ENCODE measurements at regions of chr1 and their contacts with region 1.

Region 1: DNA sequence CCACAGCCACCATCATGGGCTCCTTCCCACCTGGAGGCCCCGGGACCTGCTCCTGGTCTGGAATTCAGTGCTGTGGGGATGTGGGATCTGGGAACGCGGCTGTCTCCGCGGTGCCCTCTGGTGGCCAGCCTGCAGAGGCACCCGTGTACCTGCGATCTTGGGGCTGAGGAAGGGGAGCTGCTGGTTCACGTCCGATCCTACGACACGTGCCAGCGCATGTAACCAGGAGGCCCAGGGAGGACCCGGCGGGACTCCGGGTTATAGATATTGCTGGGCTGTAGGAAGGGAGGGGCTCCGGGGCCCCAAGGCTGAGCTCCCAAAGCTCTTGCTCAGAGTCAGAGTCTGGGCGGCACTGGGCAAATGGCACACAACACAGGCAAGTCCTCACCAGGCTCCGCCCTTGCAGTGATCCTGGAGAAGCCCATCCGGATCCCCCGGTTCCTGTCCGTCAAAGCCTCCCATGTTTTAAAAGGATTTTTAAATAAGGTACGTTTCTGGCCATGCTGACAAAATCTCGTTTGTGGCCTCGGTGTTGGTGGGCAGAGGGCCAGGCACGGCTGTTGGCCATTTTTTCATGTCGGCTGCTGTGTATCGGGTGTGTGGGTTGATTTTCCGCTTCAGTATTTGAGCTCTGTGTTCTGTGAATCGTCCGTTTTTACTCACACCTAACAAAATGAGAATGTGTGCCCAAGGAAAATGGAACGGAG is 20.1 kb downstream of the FAAP20 start:
- DNase-seq: peak; percentile 40
- H3K4me3 ChIP-seq: no peak overlapping the region
- H3K27ac ChIP-seq: no peak overlapping the region
- H3K4me1 ChIP-seq: peaks cover 4% of the 10 kb centered on the region
- H3K27me3 ChIP-seq: no peaks in the 10 kb centered on the region
- CTCF ChIP-seq: peak; percentile 89 to 94

Region 2: DNA sequence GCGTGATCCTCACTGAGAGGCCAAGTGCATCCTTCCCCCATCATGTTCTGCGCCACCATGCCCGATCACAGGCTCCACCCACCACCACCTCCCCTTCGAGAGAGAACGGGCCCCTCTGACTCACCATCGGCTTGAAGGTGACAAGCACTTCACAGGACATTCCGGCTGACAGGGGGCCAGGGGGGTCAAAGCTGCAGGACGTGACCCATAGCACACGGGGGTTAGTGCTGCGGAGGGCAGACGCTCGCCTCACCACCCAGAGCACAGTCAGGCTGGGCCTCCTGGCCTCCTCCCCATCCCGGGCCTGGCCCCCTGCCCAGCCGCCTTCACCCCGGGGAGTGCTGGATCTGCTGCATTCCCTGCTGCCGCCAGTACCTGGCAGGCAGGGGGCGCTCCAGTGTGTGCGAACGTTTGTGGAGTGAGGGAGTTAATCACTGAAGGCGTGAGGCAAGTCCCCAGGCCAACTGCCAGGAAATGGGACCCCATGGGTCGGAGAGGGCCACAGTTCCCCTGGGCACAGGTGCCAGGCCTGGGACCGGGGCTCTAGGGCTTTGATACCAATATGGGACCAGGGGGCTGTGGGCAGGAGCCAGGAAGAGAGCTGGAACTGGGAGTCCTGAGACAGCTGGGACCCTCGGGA is 214.5 kb before region 1 on chr1:
- CTCF ChIA-PET with region 1: no interaction called
- dilution Hi-C with region 1: no loop called
- in situ Hi-C with region 1: loop called in 1 of 2 experiments (anchors 5 kb)
- intact Hi-C with region 1: loop called (anchors 1 kb)
- DNase-seq: peak; percentile 69
- H3K4me3 ChIP-seq: no peak overlapping the region
- H3K27ac ChIP-seq: no peak overlapping the region
- H3K4me1 ChIP-seq: peaks cover 6% of the 10 kb centered on the region
- H3K27me3 ChIP-seq: peaks cover 7% of the 10 kb centered on the region
- CTCF ChIP-seq: peak; percentile 85 to 95

Region 3: DNA sequence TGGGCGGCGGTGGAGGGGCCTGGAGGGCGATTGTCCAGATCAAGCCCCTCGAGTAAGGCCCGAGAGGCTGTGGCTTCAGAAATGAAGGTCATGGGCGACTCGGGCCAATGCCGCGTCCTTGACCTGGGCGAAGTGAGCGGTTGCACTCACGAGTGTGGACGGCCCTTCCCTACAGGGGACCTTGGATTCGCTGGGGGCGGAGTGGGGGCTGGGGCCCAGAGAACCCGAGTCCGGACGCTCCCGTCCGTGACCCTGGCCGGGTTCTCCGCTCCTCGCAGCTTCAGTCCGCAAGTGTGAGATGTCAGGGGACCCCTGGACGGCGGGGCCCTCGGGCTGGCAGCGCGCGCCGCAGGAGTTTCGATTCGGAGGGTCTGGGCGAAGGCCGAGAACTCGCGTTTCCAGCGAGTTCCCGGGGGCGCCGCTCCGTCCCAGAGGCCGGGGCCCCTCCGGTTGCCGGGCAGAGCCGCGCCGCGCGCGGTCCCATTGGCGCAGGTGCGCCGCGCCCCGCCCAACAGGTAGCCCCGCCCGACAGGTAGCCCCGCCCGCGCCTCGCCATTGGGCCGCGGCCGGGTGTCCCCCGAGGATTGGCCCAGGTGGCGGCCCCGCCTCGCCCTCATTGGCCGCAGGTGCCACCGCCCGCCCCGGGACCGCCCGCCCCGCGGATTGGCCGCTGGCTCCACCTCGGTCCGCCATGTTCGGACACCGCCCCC is 124.6 kb before region 1 on chr1 and contains the start of gene PRKCZ:
- CTCF ChIA-PET with region 1: no interaction called
- dilution Hi-C with region 1: no loop called
- in situ Hi-C with region 1: no loop called
- intact Hi-C with region 1: loop called (anchors 2 kb)
- DNase-seq: peak; percentile 94
- H3K4me3 ChIP-seq: peak within 1 kb of the TSS; percentile 84 to 88 (median 85)
- H3K27ac ChIP-seq: peak within 1 kb of the TSS; percentile 50
- H3K4me1 ChIP-seq: peaks cover 18% of the 10 kb centered on the region
- H3K27me3 ChIP-seq: no peaks in the 10 kb centered on the region
- CTCF ChIP-seq: no peak
- total RNA-seq, gene PRKCZ: 27.0 to 42.2 TPM

Region 4: DNA sequence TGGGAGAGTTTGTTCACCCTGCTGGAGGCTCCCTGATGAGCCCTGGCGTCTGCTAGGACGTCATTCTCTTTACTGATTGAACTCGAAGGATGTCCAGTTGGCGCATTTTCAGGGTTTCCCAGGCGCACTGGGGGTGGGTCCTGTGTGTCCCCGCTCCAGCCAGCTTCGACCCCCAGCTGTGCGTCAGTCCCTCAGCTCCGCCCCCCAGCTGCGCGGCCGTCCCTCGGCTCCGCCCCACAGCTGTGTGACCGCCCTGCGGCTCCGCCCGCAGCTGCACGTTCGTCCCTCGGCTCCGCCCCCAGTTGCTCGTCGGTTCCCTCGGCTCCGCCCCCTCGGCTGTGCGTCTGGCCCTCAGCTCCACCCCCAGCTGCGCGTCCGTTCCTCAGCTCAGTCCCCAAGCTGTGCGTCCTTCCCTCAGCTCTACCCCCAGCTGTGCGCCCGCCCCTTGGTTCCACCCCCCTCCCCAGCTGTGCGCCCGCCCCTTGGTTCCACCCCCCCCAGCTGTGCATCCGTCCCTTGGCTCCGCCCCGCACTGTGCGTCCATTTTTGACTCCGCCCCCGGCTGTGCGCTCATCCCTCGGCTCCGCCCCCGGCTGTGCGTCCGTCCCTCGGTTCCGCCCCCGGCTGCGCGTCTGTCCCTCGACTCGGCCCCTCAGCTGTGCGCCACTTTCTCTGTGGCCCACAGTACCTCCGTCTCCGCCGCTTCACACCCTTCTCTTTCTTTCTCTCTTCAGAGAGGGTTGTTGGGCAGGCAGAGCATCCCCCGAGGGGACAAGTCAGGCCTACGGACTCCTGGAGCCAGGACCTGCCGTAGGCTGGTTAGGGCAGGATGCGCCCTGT is 41.2 kb before region 1 on chr1:
- CTCF ChIA-PET with region 1: interaction called, 3 read pairs
- dilution Hi-C with region 1: loop called (anchors 5 kb)
- in situ Hi-C with region 1: no loop called
- intact Hi-C with region 1: loop called (anchors 1 kb)
- DNase-seq: peak; percentile 89
- H3K4me3 ChIP-seq: peak overlapping the region; percentile 17 to 60 (median 45)
- H3K27ac ChIP-seq: peak overlapping the region; percentile 90
- H3K4me1 ChIP-seq: peaks cover 42% of the 10 kb centered on the region
- H3K27me3 ChIP-seq: no peaks in the 10 kb centered on the region
- CTCF ChIP-seq: no peak